GM12878 (cell line): ENCODE measurements at regions of chr3 and their contacts with region 1.

Region 1: GRCh38 chr3:150408221-150409102 is at the start of gene TSC22D2:
- DNase-seq: peak; percentile 69
- ATAC-seq: peak; percentile 73
- H3K4me3 ChIP-seq: peak within 1 kb of the TSS; percentile 96
- H3K27ac ChIP-seq: peak within 1 kb of the TSS; percentile 92
- H3K4me1 ChIP-seq: no peaks in the 10 kb centered on the region
- H3K27me3 ChIP-seq: no peaks in the 10 kb centered on the region
- CTCF ChIP-seq: no peak
- EP300 ChIP-seq: peak; percentile 9 to 57; a peak in 1 of 4 replicates
- POLR2A ChIP-seq: peak; percentile 77
- RAD21 ChIP-seq: no peak
- polyA plus RNA-seq, gene TSC22D2: 10.5 to 19.4 TPM

Region 2: GRCh38 chr3:149678365-149678948 is 730.0 kb before region 1 on chr3:
- CTCF ChIA-PET with region 1: no interaction called
- POLR2A ChIA-PET with region 1: no interaction called
- RAD21 ChIA-PET with region 1: no interaction called
- SMC1A ChIA-PET with region 1: no interaction called
- in situ Hi-C with region 1: no loop called
- intact Hi-C with region 1: no loop called
- DNase-seq: no peak
- ATAC-seq: no peak
- H3K4me3 ChIP-seq: no peak overlapping the region
- H3K27ac ChIP-seq: no peak overlapping the region
- H3K4me1 ChIP-seq: no peaks in the 10 kb centered on the region
- H3K27me3 ChIP-seq: no peaks in the 10 kb centered on the region
- CTCF ChIP-seq: no peak
- EP300 ChIP-seq: no peak
- POLR2A ChIP-seq: no peak
- RAD21 ChIP-seq: no peak

Region 3: GRCh38 chr3:150286390-150287147 is 121.9 kb before region 1 on chr3:
- CTCF ChIA-PET with region 1: interaction called, 10 read pairs
- POLR2A ChIA-PET with region 1: interaction called, 3 read pairs
- RAD21 ChIA-PET with region 1: interaction called, 7 read pairs
- SMC1A ChIA-PET with region 1: interaction called, 7 read pairs
- in situ Hi-C with region 1: no loop called
- intact Hi-C with region 1: loop called (anchors 2 kb)
- DNase-seq: peak; percentile 15
- ATAC-seq: peak; percentile 99
- H3K4me3 ChIP-seq: no peak overlapping the region
- H3K27ac ChIP-seq: no peak overlapping the region
- H3K4me1 ChIP-seq: no peaks in the 10 kb centered on the region
- H3K27me3 ChIP-seq: no peaks in the 10 kb centered on the region
- CTCF ChIP-seq: peak; percentile 52 to 60 (median 57); a peak in 5 of 6 replicates
- EP300 ChIP-seq: no peak
- POLR2A ChIP-seq: no peak
- RAD21 ChIP-seq: peak; percentile 75

Region 4: DNA sequence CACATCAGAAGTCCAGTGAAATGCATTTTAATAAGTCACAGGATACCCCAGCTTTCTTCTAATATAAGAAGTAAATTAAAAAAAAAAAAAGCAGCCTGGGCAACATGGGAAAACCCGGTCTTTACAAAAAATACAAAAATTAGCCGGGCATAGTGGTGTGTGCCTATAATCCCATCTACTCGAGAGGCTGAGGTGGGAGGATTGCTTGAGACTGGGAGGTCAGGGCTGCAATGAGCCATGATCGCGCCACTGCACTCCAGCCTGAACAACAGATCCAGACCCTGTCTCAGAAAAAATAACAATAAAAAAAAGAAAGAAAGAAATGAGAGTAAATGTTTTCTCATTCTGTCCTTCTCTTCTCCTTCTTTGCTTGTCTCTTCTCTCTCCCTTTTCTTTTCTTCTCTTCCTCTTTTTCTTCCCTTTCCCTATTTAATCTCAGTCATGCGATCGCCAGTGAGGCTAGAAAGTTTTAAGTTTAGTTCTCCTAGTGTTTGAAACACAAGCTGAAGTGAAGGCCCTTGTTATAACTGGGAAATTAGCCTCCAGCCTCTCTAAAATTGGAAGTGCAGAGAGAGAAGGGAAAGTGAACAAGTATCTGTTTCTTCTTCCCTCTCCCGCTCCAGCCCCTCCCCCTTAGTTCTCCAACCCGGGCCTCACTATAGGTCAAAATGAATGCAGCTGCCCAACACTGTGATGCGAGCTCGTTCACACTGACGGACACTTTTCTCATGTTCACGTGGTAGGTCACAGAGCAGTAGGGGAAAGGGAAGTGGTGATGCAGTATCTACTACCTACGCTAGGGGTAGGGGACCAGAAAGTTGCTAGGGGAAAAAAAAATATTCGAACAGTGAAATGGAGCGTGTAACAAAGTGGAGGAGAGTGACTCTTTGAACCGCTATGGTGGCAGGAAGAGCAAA is 23.9 kb before region 1 on chr3:
- CTCF ChIA-PET with region 1: interaction called, 15 read pairs
- POLR2A ChIA-PET with region 1: interaction called, 36 read pairs
- RAD21 ChIA-PET with region 1: interaction called, 52 read pairs
- SMC1A ChIA-PET with region 1: interaction called, 128 read pairs
- in situ Hi-C with region 1: no loop called
- intact Hi-C with region 1: loop called (anchors 1 kb)
- DNase-seq: peak; percentile 97
- ATAC-seq: peak; percentile 92
- H3K4me3 ChIP-seq: peak overlapping the region; percentile 58
- H3K27ac ChIP-seq: peak overlapping the region; percentile 99
- H3K4me1 ChIP-seq: peaks cover 23% of the 10 kb centered on the region
- H3K27me3 ChIP-seq: no peaks in the 10 kb centered on the region
- CTCF ChIP-seq: peak; percentile 35 to 61 (median 60)
- EP300 ChIP-seq: no peak
- POLR2A ChIP-seq: peak; percentile 59
- RAD21 ChIP-seq: peak; percentile 47; the same call in 1 of the 2 replicates

Region 5: GRCh38 chr3:150396956-150397550 is 11.4 kb before region 1 on chr3:
- CTCF ChIA-PET with region 1: interaction called, 33 read pairs
- POLR2A ChIA-PET with region 1: interaction called, 26 read pairs
- RAD21 ChIA-PET with region 1: interaction called, 46 read pairs
- SMC1A ChIA-PET with region 1: interaction called, 128 read pairs
- in situ Hi-C with region 1: no loop called
- intact Hi-C with region 1: no loop called
- DNase-seq: no peak
- ATAC-seq: no peak
- H3K4me3 ChIP-seq: no peak overlapping the region
- H3K27ac ChIP-seq: no peak overlapping the region
- H3K4me1 ChIP-seq: no peaks in the 10 kb centered on the region
- H3K27me3 ChIP-seq: no peaks in the 10 kb centered on the region; a peak in 1 of 4 replicates
- CTCF ChIP-seq: no peak
- EP300 ChIP-seq: no peak
- POLR2A ChIP-seq: no peak
- RAD21 ChIP-seq: no peak

Region 6: GRCh38 chr3:150428562-150428961 is 20.1 kb after region 1 on chr3:
- CTCF ChIA-PET with region 1: interaction called, 15 read pairs
- POLR2A ChIA-PET with region 1: interaction called, 21 read pairs
- RAD21 ChIA-PET with region 1: interaction called, 7 read pairs
- SMC1A ChIA-PET with region 1: interaction called, 50 read pairs
- in situ Hi-C with region 1: no loop called
- intact Hi-C with region 1: no loop called
- DNase-seq: no peak
- ATAC-seq: no peak
- H3K4me3 ChIP-seq: no peak overlapping the region
- H3K27ac ChIP-seq: no peak overlapping the region
- H3K4me1 ChIP-seq: no peaks in the 10 kb centered on the region
- H3K27me3 ChIP-seq: no peaks in the 10 kb centered on the region
- CTCF ChIP-seq: no peak
- EP300 ChIP-seq: no peak
- POLR2A ChIP-seq: no peak
- RAD21 ChIP-seq: no peak

Region 7: DNA sequence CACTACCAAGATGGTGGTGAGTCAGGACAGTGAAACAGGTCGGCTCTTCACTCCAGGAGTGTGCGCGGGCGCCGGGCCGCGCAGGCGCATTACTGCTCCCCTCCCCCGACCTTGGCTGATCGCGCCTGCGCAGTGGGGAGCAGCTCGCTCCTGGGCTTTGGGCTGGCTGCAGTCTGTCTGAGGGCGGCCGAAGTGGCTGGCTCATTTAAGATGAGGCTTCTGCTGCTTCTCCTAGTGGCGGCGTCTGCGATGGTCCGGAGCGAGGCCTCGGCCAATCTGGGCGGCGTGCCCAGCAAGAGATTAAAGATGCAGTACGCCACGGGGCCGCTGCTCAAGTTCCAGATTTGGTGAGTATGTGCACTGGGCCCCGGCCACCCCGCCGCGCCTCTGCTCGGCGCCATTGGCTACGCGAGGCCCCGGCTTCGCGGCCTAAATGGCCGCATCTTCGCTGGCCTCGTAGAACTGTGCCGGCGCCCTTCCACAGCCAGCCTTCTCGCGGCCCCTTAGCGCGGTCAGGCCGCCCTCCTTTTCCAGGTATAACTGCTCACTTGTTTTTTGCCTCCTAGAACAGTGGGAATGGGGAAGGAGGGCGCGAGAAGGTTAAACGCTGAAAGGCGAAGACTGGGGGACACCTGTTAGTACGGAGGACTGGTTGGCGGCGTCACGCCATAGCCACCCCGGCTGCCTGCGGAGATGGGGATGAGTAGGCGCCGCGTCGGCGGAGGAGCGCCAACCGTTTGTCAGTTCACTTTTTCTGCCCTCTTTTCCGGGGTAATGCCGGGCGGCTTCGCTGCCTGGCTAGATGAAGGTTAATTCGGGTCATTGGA is 194.9 kb after region 1 on chr3 and contains the start of gene SELENOT:
- CTCF ChIA-PET with region 1: no interaction called
- POLR2A ChIA-PET with region 1: interaction called, 6 read pairs
- RAD21 ChIA-PET with region 1: interaction called, 7 read pairs
- SMC1A ChIA-PET with region 1: interaction called, 3 read pairs
- in situ Hi-C with region 1: no loop called
- intact Hi-C with region 1: loop called (anchors 5 kb)
- DNase-seq: peak; percentile 94
- ATAC-seq: peak; percentile 70
- H3K4me3 ChIP-seq: peak within 1 kb of the TSS; percentile 92
- H3K27ac ChIP-seq: peak within 1 kb of the TSS; percentile 92
- H3K4me1 ChIP-seq: peaks cover 16% of the 10 kb centered on the region
- H3K27me3 ChIP-seq: no peaks in the 10 kb centered on the region
- CTCF ChIP-seq: peak; percentile 2 to 22 (median 10); a peak in 1 of 6 replicates
- EP300 ChIP-seq: peak in 1 of 2 experiments; percentile 32; a peak in 1 of 4 replicates
- POLR2A ChIP-seq: peak; percentile 100
- RAD21 ChIP-seq: 0 out of 2 replicates have a peak, but pooled peaks have one; percentile 1
- polyA plus RNA-seq, gene SELENOT: 323 to 593 TPM

Region 8: GRCh38 chr3:150787741-150788370 is 379.4 kb after region 1 on chr3:
- CTCF ChIA-PET with region 1: no interaction called
- POLR2A ChIA-PET with region 1: no interaction called
- RAD21 ChIA-PET with region 1: no interaction called
- SMC1A ChIA-PET with region 1: no interaction called
- in situ Hi-C with region 1: no loop called
- intact Hi-C with region 1: no loop called
- DNase-seq: no peak
- ATAC-seq: peak; percentile 94
- H3K4me3 ChIP-seq: no peak overlapping the region
- H3K27ac ChIP-seq: no peak overlapping the region
- H3K4me1 ChIP-seq: peaks cover 2% of the 10 kb centered on the region; the same call in 1 of the 2 replicates
- H3K27me3 ChIP-seq: no peaks in the 10 kb centered on the region; a peak in 1 of 4 replicates
- CTCF ChIP-seq: peak; percentile 94 to 98 (median 97); a peak in 5 of 6 replicates
- EP300 ChIP-seq: no peak
- POLR2A ChIP-seq: no peak
- RAD21 ChIP-seq: peak; percentile 81